ENCODE measurements at regions of chr19 and their contacts with region 1.

Region 1: DNA sequence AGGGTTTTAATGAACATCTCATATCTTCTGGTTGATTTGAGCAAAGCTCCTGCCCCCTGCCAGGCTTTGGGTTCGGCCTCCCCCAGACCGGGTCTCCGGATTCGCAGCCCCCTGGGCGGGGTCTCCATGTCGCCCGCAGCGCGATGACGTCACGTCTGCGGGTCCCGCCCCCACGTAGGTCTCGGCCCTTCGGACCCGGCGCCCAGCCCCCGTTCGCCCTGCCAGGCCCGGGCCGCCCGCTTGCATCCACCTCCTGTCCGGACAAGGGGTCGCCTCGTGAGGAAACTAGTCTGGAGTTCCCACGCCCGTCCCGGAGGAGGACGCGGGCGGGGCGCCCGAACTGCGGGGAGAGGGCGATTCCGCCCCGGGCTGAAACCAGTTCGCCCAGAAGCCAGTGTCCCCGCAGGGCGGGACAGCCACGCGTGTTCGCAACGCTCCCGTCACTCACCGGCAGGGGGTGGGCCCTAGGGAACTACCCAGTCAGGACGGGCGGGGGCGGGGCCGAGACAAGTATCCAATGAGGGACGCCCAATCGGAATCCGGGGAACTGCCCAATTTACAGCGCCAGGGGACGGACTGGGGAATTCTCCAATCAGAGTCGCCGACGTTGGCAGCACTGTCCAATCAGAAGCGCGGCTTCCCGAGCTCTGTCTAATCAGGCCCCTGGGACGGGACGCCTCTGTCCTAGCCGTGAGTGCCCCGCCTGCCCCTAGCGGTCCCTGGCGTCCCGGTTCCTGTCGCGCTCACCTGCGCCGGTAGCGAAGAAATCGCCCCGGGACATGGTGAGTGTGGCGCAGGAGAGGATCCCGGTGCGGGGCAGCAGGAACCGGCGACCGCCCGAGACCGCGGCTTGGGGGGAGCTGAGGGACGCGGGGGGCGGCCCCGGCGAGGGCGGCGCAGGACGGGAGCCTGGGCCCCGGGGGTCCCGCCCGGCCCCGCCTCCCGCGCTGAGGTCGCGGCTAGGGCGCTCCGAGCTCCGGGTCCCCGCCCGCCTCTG is at the start of gene ZNF555:
- DNase-seq: peak; percentile 88
- ATAC-seq: peak; percentile 90
- H3K4me3 Mint-ChIP-seq: peak within 1 kb of the TSS; percentile 92
- H3K27ac Mint-ChIP-seq: peak within 1 kb of the TSS; percentile 83
- H3K4me1 Mint-ChIP-seq: peaks cover 19% of the 10 kb centered on the region
- H3K27me3 Mint-ChIP-seq: no peaks in the 10 kb centered on the region
- CTCF ChIP-seq: no peak
- total RNA-seq, gene ZNF555: 7.4 and 8.4 TPM in 2 replicates

Region 2: DNA sequence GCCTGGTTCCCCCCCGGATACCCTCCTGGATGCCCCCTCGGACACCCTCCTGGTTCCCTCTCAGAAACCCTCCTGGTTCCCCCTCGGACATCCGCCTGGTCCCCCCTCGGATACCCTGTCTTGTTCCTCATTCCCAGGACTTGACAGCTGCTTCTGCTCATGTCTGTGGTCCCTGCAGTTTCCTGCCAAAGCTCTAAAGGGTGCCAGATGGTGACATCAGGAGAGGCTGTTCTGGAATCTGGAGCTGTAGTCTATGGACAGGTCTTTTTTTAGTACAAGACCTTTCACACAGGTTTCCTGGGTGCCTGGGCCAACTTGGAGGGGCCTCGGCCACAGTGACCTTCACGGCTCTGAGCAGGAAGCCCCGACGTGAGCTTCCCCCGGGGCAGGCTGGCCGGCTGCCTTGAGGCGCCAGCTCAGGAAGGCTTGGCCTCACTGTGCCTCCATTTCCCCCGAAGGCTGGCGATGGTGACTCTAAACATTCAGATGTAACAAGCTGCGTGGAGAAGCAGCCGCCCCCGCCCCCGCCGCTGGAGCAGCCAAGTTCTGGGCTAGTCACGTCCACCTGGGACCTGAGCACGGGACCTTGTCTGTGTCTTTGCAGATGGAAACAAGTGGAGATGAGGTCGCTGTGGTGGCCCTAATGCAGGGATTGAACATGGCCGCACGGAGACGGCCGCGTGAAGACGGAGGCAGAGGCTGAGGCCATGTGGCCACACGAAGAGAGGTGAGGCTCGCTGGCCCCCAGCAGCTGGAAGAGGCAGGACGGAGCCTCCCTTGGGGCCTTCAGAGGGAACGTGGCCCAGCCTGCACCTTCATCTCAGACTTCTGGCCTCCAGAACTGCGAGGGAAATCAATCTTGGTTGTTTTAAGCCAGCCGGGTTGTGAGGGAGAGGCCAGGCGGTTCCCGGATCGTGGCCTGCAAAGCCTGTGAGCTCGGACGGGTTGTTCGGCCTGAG is 70.8 kb before region 1 on chr19:
- CTCF ChIA-PET with region 1: no interaction called
- POLR2A ChIA-PET with region 1: no interaction called
- intact Hi-C with region 1: no loop called
- DNase-seq: no peak
- ATAC-seq: no peak
- H3K4me3 Mint-ChIP-seq: no peak overlapping the region
- H3K27ac Mint-ChIP-seq: no peak overlapping the region
- H3K4me1 Mint-ChIP-seq: peaks cover 22% of the 10 kb centered on the region
- H3K27me3 Mint-ChIP-seq: no peaks in the 10 kb centered on the region
- CTCF ChIP-seq: no peak

Region 3: GRCh38 chr19:2820112-2820702 is 20.9 kb before region 1 on chr19:
- CTCF ChIA-PET with region 1: interaction called, 3 read pairs
- POLR2A ChIA-PET with region 1: interaction called, 14 read pairs
- intact Hi-C with region 1: loop called (anchors 1 kb)
- DNase-seq: no peak
- ATAC-seq: no peak
- H3K4me3 Mint-ChIP-seq: peak overlapping the region; percentile 83
- H3K27ac Mint-ChIP-seq: no peak overlapping the region
- H3K4me1 Mint-ChIP-seq: peaks cover 14% of the 10 kb centered on the region
- H3K27me3 Mint-ChIP-seq: no peaks in the 10 kb centered on the region
- CTCF ChIP-seq: no peak

Region 4: DNA sequence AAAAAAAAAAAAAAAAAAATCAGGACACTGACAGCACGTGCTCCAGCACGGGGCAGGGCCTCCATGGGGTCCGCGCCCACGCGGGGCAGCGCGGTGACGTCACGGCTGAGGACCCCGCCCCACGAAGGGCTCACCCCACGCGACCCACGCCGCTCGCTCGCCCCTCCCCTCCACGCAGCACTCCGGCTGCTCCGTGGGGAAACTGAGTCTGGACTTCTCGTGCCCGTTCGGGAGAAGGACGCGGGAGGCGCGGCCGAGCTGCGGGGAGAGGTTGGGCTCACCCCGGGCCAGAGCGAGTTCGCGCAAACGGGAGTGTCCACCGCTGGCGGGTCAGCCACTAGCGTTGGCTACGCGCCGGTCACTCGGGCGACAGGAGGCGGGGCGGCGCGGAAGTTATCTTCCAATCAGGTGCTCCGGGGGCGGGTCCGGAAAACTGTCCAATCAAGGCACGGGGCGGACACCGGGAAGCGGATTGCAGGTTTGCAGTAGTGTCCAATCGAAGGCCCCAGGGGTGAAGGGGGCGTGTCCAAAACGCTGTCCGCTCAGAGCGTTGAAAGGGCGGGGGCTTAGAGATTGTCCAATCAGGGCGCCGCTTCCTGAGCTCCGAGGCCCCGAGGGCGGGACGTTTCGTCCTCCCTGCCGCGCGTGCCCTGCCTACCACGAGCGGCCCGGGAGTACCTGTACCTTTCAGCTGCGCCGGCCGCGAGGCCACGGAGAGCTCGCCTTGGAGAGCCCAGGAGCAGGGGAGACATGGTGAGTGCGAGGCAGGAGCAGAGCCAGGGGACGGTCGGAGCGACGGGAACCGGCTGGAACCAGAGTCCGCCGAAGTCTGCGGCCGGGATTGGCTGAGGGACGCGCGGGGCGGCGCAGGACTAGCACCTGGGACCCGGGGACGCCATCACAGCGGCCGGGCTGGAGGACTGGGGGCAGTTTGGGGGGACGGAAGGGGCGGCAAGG is 59.5 kb after region 1 on chr19 and contains the start of gene ZNF57:
- CTCF ChIA-PET with region 1: no interaction called
- POLR2A ChIA-PET with region 1: interaction called, 3 read pairs
- intact Hi-C with region 1: loop called (anchors 2 kb)
- DNase-seq: peak; percentile 89
- ATAC-seq: peak; percentile 99
- H3K4me3 Mint-ChIP-seq: peak within 1 kb of the TSS; percentile 99
- H3K27ac Mint-ChIP-seq: peak within 1 kb of the TSS; percentile 87
- H3K4me1 Mint-ChIP-seq: peaks cover 10% of the 10 kb centered on the region
- H3K27me3 Mint-ChIP-seq: no peaks in the 10 kb centered on the region
- CTCF ChIP-seq: no peak
- total RNA-seq, gene ZNF57: 4.6 and 5.3 TPM in 2 replicates